ENCODE measurements at regions of chr2 and their contacts with region 1.

Region 1: GRCh38 chr2:113889471-113890252 is at the start of gene ACTR3:
- DNase-seq: peak; percentile 94 to 98
- H3K4me3 ChIP-seq: peak within 1 kb of the TSS; percentile 88
- H3K27ac ChIP-seq: peak within 1 kb of the TSS; percentile 83
- H3K4me1 ChIP-seq: peaks cover 56% of the 10 kb centered on the region
- H3K27me3 ChIP-seq: no peaks in the 10 kb centered on the region
- CTCF ChIP-seq: no peak
- total RNA-seq, gene ACTR3: 220 and 222 TPM in 2 replicates

Region 2: DNA sequence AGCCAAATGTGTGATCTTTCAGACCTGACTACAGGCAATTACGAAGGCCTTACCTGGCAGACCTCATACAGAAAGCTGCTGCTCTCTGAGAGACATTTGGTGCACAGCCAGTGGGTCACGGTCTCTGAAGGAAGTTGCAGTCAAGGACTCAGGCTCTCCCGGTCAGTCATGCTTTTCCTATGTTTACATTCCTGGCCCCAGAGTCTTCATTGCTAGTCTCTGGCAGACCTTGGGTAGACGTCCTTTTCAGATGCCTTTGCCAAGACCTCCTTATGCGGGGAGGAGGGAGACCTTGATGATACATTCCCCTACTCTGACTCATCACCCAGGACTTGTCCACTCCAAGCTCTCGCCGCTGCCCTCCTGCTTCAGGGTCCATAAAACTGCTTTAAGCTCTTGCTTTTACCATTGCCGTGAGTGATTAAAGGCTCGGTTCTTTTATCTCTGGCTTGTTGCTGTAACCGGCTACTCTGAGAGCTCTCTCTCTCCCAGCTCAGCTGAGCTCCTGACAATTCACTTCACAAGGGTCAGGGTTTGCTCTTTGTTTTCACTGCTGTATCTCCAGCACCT is 71.2 kb before region 1 on chr2:
- CTCF ChIA-PET with region 1: no interaction called
- POLR2A ChIA-PET with region 1: interaction called, 6 read pairs
- intact Hi-C with region 1: loop called (anchors 1 kb)
- DNase-seq: peak; percentile 76 to 88
- H3K4me3 ChIP-seq: peak overlapping the region; percentile 42; the same call in 1 of the 2 replicates
- H3K27ac ChIP-seq: peak overlapping the region; percentile 52
- H3K4me1 ChIP-seq: peaks cover 19% of the 10 kb centered on the region
- H3K27me3 ChIP-seq: no peaks in the 10 kb centered on the region
- CTCF ChIP-seq: no peak

Region 3: DNA sequence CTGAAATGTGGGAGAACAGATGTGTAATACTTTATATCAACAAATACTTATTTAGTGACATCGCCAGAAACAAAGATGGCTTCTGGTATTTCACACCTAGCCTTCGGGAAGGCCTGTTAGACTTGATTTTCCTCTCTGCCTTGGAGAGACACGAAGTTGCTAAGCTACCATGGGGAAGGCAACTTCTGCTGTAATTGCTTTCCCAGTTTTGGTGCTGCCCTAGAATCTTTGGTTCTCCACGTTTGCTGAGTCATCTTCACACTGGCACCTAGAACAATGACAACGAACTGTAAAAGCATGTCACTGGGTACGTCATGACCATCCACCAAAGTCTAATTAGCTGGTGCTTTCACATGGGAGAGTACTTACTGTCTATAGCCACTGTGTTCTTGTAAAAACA is 58.5 kb before region 1 on chr2:
- CTCF ChIA-PET with region 1: no interaction called
- POLR2A ChIA-PET with region 1: interaction called, 4 read pairs
- intact Hi-C with region 1: loop called (anchors 1 kb)
- DNase-seq: peak; percentile 71 to 93
- H3K4me3 ChIP-seq: no peak overlapping the region
- H3K27ac ChIP-seq: peak overlapping the region; percentile 80
- H3K4me1 ChIP-seq: peaks cover 10% of the 10 kb centered on the region
- H3K27me3 ChIP-seq: no peaks in the 10 kb centered on the region
- CTCF ChIP-seq: no peak

Region 4: DNA sequence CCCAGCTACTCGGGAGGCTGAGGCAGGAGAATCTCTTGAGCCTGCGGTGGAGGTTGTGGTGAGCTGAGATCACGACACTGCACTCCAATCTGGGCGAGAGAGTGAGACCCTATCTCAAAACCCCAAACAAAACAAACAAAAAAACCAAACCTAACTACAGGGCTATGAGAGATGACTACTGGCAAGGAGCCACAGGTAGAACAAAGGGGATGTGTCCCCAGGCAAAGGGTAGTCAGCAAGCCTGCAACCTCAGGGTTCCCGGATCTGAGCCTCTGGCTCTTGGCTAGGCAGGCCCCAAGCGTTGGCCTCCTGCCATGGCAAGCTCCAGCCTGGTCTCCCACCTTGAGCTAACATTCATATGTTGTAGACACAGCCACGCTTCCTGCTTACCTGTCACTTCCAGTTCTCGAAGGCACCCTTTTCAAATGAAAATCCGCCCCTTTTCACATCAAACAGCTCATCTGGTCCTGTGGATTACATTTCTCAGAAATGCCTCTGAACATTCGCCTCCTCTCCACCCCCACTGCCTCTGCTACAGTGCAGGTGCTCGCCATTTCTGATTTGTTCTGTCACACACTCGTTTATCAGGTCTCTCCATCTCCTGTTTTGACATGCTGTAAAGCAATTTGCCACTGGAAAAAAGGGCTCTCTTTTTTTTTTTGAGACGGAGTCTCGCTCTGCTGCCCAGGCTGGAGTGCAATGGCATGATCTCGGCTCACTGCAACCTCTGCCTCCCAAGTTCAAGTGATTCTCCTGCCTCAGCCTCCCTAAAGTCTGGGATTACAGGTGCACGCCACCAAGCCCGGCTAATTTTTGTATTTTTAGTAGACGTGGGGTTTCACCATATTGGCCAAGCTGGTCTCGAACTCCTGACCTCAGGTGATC is 12.9 kb before region 1 on chr2:
- CTCF ChIA-PET with region 1: interaction called, 3 read pairs
- POLR2A ChIA-PET with region 1: interaction called, 5 read pairs
- intact Hi-C with region 1: loop called (anchors 1 kb)
- DNase-seq: peak; percentile 94 to 95
- H3K4me3 ChIP-seq: no peak overlapping the region
- H3K27ac ChIP-seq: no peak overlapping the region
- H3K4me1 ChIP-seq: peaks cover 34% of the 10 kb centered on the region
- H3K27me3 ChIP-seq: no peaks in the 10 kb centered on the region
- CTCF ChIP-seq: no peak

Region 5: GRCh38 chr2:113930448-113930847 is 40.8 kb after region 1 on chr2:
- CTCF ChIA-PET with region 1: no interaction called
- POLR2A ChIA-PET with region 1: no interaction called
- intact Hi-C with region 1: loop called (anchors 5 kb)
- DNase-seq: no peak
- H3K4me3 ChIP-seq: no peak overlapping the region
- H3K27ac ChIP-seq: no peak overlapping the region
- H3K4me1 ChIP-seq: no peaks in the 10 kb centered on the region
- H3K27me3 ChIP-seq: no peaks in the 10 kb centered on the region
- CTCF ChIP-seq: no peak

Measured in PC-9 (cell line).